AG04450 (cell line): ENCODE measurements at regions of chr12 and their contacts with region 1.

Region 1: GRCh38 chr12:49358483-49359141 is 8.7 kb upstream of the SPATS2 start:
- DNase-seq: no peak
- H3K4me3 ChIP-seq: no peak overlapping the region
- H3K27ac ChIP-seq: no peak overlapping the region
- H3K27me3 ChIP-seq: no peaks in the 10 kb centered on the region
- CTCF ChIP-seq: peak; percentile 82

Region 2: GRCh38 chr12:49060237-49061156 is 298.1 kb before region 1 on chr12 and contains the start of gene KMT2D:
- CTCF ChIA-PET with region 1: no interaction called
- POLR2A ChIA-PET with region 1: no interaction called
- DNase-seq: peak; percentile 92
- H3K4me3 ChIP-seq: peak within 1 kb of the TSS; percentile 83
- H3K27ac ChIP-seq: peak within 1 kb of the TSS; percentile 96
- H3K27me3 ChIP-seq: no peaks in the 10 kb centered on the region
- CTCF ChIP-seq: peak; percentile 46
- polyA plus RNA-seq, gene KMT2D: 8.9 and 11.2 TPM in 2 replicates

Region 3: GRCh38 chr12:49322708-49323523 is 35.7 kb before region 1 on chr12 and contains the start of gene TROAP:
- CTCF ChIA-PET with region 1: interaction called, 10 read pairs
- POLR2A ChIA-PET with region 1: no interaction called
- DNase-seq: peak; percentile 95
- H3K4me3 ChIP-seq: peak within 1 kb of the TSS; percentile 84
- H3K27ac ChIP-seq: peak within 1 kb of the TSS; percentile 47
- H3K27me3 ChIP-seq: peaks cover 4% of the 10 kb centered on the region
- CTCF ChIP-seq: no peak
- polyA plus RNA-seq, gene TROAP: 7.6 and 10.3 TPM in 2 replicates

Region 4: DNA sequence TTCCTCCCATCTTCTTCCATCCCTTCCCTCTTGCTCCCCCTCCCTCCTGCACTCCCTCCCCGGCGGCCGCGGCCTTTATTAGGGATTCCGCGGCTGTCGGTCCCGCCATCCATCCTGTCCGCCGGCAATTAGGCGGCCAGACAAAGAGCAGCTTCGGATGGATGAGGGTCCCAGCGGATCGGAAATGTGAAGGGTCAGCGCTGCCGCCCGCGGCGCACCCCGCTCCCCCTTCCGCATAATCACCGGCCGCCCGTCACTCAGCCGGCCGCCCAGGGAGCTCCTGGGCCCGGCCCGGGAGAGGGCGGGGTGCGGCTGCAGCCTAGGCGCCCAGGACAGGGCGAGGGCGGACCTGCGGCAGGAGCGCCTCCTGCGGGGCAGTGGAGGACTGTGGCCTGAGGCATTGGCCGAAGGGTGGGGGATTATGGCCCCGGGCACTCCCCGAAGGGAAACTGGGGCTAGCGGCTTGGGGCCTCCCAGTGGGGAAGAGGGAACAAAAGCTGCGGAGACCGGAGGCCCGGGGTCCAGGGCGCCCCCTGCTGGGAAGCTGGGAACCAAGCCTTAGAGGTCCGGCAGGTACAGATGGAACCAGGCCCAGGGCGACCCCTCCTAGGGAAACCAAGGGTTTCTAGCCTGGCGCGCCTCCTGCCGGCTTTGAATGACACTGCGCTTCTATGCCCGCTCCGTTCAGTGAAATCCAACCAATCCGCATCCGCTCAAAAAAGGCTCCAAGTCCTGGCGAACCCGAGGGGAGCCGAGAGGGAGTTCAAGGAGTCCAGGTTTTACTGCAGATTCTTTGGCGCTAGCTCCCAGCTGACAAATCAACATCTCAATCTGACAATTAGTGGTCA is 16.3 kb before region 1 on chr12:
- CTCF ChIA-PET with region 1: interaction called, 123 read pairs
- POLR2A ChIA-PET with region 1: no interaction called
- DNase-seq: peak; percentile 30
- H3K4me3 ChIP-seq: peak overlapping the region; percentile 49
- H3K27ac ChIP-seq: no peak overlapping the region
- H3K27me3 ChIP-seq: peaks cover 85% of the 10 kb centered on the region
- CTCF ChIP-seq: peak; percentile 70

Region 5: GRCh38 chr12:49470986-49471385 is 112.4 kb after region 1 on chr12:
- CTCF ChIA-PET with region 1: interaction called, 18 read pairs
- POLR2A ChIA-PET with region 1: no interaction called
- DNase-seq: no peak
- H3K4me3 ChIP-seq: no peak overlapping the region
- H3K27ac ChIP-seq: no peak overlapping the region
- H3K27me3 ChIP-seq: no peaks in the 10 kb centered on the region
- CTCF ChIP-seq: no peak

Region 6: GRCh38 chr12:49503674-49504180 is 145.1 kb after region 1 on chr12:
- CTCF ChIA-PET with region 1: interaction called, 454 read pairs
- POLR2A ChIA-PET with region 1: interaction called, 3 read pairs
- DNase-seq: peak; percentile 15
- H3K4me3 ChIP-seq: no peak overlapping the region
- H3K27ac ChIP-seq: no peak overlapping the region
- H3K27me3 ChIP-seq: no peaks in the 10 kb centered on the region
- CTCF ChIP-seq: no peak

Region 7: GRCh38 chr12:49534731-49535278 is 176.2 kb after region 1 on chr12:
- CTCF ChIA-PET with region 1: interaction called, 12 read pairs
- POLR2A ChIA-PET with region 1: no interaction called
- DNase-seq: no peak
- H3K4me3 ChIP-seq: no peak overlapping the region
- H3K27ac ChIP-seq: no peak overlapping the region
- H3K27me3 ChIP-seq: peaks cover 20% of the 10 kb centered on the region
- CTCF ChIP-seq: no peak

Region 8: GRCh38 chr12:49580572-49581535 is 222.2 kb after region 1 on chr12:
- CTCF ChIA-PET with region 1: interaction called, 120 read pairs
- POLR2A ChIA-PET with region 1: interaction called, 4 read pairs
- DNase-seq: peak; percentile 42
- H3K4me3 ChIP-seq: no peak overlapping the region
- H3K27ac ChIP-seq: no peak overlapping the region
- H3K27me3 ChIP-seq: no peaks in the 10 kb centered on the region
- CTCF ChIP-seq: peak; percentile 93

Region 9: DNA sequence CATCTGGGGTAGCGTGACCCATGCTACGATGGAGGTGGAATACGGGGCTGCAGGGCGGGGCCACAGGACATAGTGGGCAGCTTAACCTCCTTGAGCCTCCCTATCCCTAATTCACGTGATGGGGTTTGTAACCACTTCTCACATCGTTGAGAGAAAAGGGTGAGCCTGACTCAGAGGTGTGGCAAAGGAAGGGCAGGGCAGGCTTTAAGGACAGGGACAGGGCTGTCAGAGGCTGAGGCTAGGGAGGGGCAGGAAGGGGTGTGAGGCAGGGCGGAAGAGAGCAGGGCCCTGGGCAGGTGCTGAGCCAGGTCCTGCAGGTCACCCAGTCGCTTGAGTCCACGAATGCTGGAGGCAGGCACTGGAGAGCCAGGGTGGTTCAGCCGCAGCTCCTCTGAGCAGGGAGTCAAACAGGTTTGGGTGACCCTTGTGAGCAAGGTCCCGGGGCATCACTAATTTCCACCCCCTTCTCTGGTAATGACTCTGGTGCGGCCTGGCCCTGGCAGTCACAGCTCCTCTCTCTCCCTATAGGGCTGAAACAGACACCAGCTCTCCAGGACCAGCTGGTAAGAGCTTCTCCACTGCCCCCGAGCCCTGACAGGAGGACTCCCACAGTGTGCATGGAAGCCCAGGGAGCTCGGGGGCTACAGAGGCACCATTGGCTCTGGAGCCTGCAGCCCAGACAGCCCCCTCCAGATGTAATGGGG is 584.5 kb after region 1 on chr12:
- CTCF ChIA-PET with region 1: no interaction called
- POLR2A ChIA-PET with region 1: no interaction called
- DNase-seq: no peak
- H3K4me3 ChIP-seq: no peak overlapping the region
- H3K27ac ChIP-seq: no peak overlapping the region
- H3K27me3 ChIP-seq: peaks cover 4% of the 10 kb centered on the region
- CTCF ChIP-seq: no peak